ENCODE measurements at regions of chr1 and their contacts with region 1.

Region 1: GRCh38 chr1:221394011-221394544 is 347.8 kb downstream of the DUSP10 start:
- DNase-seq: peak; percentile 88
- H3K4me3 Mint-ChIP-seq: no peak overlapping the region
- H3K27ac Mint-ChIP-seq: peak overlapping the region; percentile 55
- H3K4me1 Mint-ChIP-seq: peaks cover 50% of the 10 kb centered on the region
- H3K27me3 Mint-ChIP-seq: no peaks in the 10 kb centered on the region
- CTCF ChIP-seq: no peak

Region 2: GRCh38 chr1:221294244-221294643 is 99.8 kb before region 1 on chr1:
- CTCF ChIA-PET with region 1: no interaction called
- POLR2A ChIA-PET with region 1: interaction called, 4 read pairs
- intact Hi-C with region 1: loop called (anchors 1 kb)
- DNase-seq: peak; percentile 98
- H3K4me3 Mint-ChIP-seq: no peak overlapping the region
- H3K27ac Mint-ChIP-seq: no peak overlapping the region
- H3K4me1 Mint-ChIP-seq: no peaks in the 10 kb centered on the region
- H3K27me3 Mint-ChIP-seq: no peaks in the 10 kb centered on the region
- CTCF ChIP-seq: no peak

Region 3: GRCh38 chr1:221381910-221382623 is 12.0 kb before region 1 on chr1:
- CTCF ChIA-PET with region 1: interaction called, 5 read pairs
- POLR2A ChIA-PET with region 1: interaction called, 31 read pairs
- intact Hi-C with region 1: no loop called
- DNase-seq: no peak
- H3K4me3 Mint-ChIP-seq: no peak overlapping the region
- H3K27ac Mint-ChIP-seq: no peak overlapping the region
- H3K4me1 Mint-ChIP-seq: no peaks in the 10 kb centered on the region
- H3K27me3 Mint-ChIP-seq: no peaks in the 10 kb centered on the region
- CTCF ChIP-seq: no peak

Region 4: GRCh38 chr1:221429262-221429661 is 35.2 kb after region 1 on chr1:
- CTCF ChIA-PET with region 1: interaction called, 6 read pairs
- POLR2A ChIA-PET with region 1: interaction called, 11 read pairs
- intact Hi-C with region 1: loop called (anchors 1 kb)
- DNase-seq: peak; percentile 83
- H3K4me3 Mint-ChIP-seq: no peak overlapping the region
- H3K27ac Mint-ChIP-seq: peak overlapping the region; percentile 54
- H3K4me1 Mint-ChIP-seq: peaks cover 15% of the 10 kb centered on the region
- H3K27me3 Mint-ChIP-seq: no peaks in the 10 kb centered on the region
- CTCF ChIP-seq: no peak

Measured in MCF 10A (cell line).